Right ventricle myocardium inferior (tissue), 1 donor: ENCODE measurements at regions of chr7 and their contacts with region 1.

Region 1: DNA sequence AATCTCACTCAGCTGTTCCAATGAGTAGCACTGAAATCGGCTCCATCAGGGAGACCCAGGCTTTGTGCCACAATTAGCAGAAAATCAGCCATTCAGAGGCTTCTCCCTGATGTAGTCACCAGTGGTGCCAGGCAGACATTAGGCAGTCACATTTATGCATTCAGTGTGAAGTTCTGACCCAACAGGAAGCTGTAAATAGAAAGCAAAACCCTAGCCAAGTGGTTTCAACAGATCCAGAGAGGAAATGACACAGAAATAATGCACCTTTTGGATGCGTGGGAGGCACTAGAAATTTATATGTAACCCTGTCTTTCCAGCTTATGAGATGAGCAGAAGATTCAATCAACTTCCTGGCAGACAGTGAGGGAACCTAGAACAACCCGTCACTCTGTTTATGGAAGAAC is 186.4 kb downstream of the PDE1C start:
- DNase-seq: no peak
- ATAC-seq: peak; percentile 53

Region 2: GRCh38 chr7:31432836-31433340 is 450.9 kb before region 1 on chr7:
- intact Hi-C with region 1: no loop called
- DNase-seq: no peak
- ATAC-seq: no peak

Region 3: DNA sequence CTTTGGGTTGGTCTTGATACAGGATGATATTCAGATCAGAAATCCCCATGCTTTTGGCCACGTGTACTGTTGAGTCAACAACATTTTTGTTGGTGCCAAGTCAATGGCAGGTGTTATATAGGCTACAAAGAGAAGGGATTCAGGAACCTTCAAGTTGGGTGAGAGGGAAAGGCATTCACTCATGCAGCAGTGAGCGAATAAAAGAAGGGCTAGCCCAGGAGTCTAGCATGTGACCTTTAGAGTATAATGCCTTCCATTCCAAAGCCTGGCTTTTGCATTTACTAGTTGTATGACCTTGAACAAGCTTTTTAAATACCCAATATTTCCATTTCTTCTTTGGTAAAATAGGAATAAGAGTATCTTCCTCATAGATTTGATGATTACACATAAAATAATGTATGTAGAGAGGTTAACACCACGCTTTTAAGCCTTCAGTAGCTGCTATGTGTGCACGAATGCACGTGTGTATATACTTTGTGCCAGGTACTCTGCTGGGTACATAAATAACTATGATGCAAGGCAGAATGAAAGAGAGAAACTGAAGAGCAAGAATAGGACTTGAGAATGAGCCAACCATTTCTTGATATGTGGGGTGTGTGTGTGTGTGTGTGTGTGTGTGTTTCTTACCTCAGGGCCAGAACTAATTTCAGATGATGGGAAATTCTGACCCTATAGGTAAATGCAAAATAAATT is 22.9 kb after region 1 on chr7:
- intact Hi-C with region 1: loop called (anchors 2 kb)
- DNase-seq: no peak
- ATAC-seq: peak; percentile 61

Region 4: DNA sequence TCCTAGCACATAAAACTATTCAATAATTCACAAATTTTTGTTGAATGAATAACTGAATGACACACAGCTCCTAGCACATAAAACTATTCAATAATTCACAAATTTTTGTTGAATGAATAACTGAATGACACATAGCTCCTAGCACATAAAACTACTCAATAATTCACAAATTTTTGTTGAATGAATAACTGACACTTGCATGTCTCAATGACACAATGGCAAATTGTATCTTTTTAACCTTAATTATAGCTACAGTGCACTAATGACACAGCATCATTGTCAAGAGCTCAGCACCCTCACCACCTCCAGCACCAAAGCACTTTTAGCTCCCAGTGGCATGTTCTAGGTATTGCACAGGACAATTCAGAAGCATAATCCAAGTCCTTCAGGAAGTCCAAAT is 54.9 kb after region 1 on chr7:
- intact Hi-C with region 1: no loop called
- DNase-seq: no peak
- ATAC-seq: no peak

Region 5: GRCh38 chr7:32070406-32071360 is 186.9 kb after region 1 on chr7 and contains the start of gene PDE1C:
- intact Hi-C with region 1: loop called (anchors 5 kb)
- DNase-seq: peak; percentile 81
- ATAC-seq: peak; percentile 90
- total RNA-seq, gene PDE1C: 198 TPM